ENCODE measurements at regions of chr20 and their contacts with region 1.

Region 1: DNA sequence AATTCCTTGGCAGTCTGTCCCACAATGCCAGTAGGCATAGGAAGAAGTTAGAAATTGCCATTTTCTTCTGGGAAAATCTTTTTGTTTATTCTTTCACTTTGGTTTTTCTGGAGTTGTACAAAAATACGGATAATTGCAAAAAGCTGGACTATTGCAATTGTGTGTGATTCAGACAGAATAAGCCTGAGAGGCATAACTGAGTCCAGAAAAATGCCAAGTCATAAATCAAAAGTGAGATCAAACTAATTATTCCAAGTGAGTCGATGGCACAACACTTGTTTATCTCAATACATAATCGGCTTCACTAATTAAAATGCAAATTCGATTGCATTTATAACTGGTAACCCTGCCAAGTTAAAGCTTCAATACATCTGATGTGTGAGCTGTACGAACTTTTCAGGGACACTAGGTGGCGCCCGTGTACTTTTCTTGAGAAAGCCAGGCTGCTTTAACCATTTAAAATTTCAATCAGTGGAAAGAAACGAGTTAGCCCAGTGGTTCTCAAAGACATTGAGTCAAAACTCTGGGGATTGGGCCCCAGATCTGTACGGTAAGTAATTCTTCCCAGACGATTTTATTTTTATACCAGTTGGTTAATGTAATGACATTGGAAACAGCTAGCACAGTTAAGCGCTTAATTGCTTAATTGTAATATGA is 102.6 kb downstream of the LAMP5 start:
- DNase-seq: peak in 1 of 2 experiments; percentile 67
- H3K4me3 ChIP-seq: no peak overlapping the region
- H3K27ac ChIP-seq: no peak overlapping the region
- H3K4me1 ChIP-seq: no peaks in the 10 kb centered on the region
- H3K27me3 ChIP-seq: no peaks in the 10 kb centered on the region
- CTCF ChIP-seq: peak in 2 of 3 experiments; percentile 79 to 85; a peak in 3 of 4 replicates
- EP300 ChIP-seq: no peak
- POLR2A ChIP-seq: no peak
- RAD21 ChIP-seq: peak; percentile 93 to 97

Region 2: DNA sequence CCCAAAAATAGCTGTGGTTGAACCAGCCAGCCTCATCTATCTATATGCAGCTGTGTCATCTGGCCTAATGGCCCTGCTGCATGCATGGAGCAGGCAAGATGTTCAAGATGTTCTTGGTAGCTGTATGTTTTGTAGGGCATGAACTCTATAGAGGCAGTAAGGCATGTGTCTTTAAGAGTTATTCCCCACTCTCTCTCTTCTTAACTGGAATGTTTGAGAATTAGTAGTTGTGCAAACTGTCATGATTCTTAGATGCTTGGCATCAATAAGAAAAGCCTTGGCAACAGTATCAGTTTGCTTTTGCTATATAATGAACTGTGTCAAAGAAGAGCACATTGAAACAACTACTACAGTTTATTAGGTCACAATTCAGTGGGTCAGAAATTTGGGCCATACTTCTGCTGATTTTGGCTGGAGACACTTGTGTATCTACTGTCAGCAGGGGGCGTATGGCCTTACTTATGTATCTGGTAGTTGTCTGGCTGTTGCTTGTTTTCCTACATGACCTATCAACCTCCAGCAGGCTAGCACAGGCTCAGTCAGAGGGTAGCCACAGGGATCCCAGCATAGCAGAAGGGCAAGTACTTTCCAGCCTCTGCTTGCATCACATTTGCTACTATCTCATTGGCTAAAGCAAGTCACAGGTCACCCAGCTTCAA is 158.7 kb before region 1 on chr20:
- CTCF ChIA-PET with region 1: interaction called, 89 read pairs
- POLR2A ChIA-PET with region 1: no interaction called
- DNase-seq: peak in 1 of 2 experiments; percentile 53
- H3K4me3 ChIP-seq: no peak overlapping the region
- H3K27ac ChIP-seq: no peak overlapping the region
- H3K4me1 ChIP-seq: no peaks in the 10 kb centered on the region
- H3K27me3 ChIP-seq: no peaks in the 10 kb centered on the region
- CTCF ChIP-seq: peak in 2 of 3 experiments; percentile 53 to 62; a peak in 3 of 4 replicates
- EP300 ChIP-seq: no peak
- POLR2A ChIP-seq: no peak
- RAD21 ChIP-seq: peak; percentile 54 to 56; a peak in 3 of 4 replicates

Region 3: DNA sequence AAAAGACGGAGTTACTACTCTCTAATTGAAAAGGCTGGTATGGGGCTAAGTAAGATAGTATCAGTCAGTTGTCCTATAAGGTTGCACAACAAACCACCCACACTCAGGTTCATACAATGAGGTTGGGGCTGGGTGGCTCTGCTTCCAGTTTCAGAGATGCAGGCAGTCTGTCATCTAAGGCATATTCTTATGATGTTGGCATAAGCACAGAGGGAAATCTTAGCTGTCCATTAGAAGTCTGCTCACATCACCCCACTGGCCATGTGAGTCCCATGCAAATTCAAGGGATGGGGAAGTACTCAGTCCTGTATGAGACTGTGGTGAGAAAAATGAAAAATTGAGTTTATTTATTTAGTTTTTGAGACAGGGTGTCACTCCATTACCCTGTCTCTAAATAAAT is 16.0 kb after region 1 on chr20:
- CTCF ChIA-PET with region 1: interaction called, 29 read pairs
- POLR2A ChIA-PET with region 1: no interaction called
- DNase-seq: no peak
- H3K4me3 ChIP-seq: no peak overlapping the region
- H3K27ac ChIP-seq: no peak overlapping the region
- H3K4me1 ChIP-seq: no peaks in the 10 kb centered on the region
- H3K27me3 ChIP-seq: no peaks in the 10 kb centered on the region
- CTCF ChIP-seq: no peak
- EP300 ChIP-seq: no peak
- POLR2A ChIP-seq: no peak
- RAD21 ChIP-seq: no peak

Region 4: GRCh38 chr20:9912858-9913434 is 296.0 kb after region 1 on chr20:
- CTCF ChIA-PET with region 1: interaction called, 76 read pairs
- POLR2A ChIA-PET with region 1: no interaction called
- DNase-seq: peak in 1 of 2 experiments; percentile 72
- H3K4me3 ChIP-seq: no peak overlapping the region
- H3K27ac ChIP-seq: no peak overlapping the region
- H3K4me1 ChIP-seq: no peaks in the 10 kb centered on the region
- H3K27me3 ChIP-seq: no peaks in the 10 kb centered on the region
- CTCF ChIP-seq: peak in 2 of 3 experiments; percentile 70 to 74; a peak in 3 of 4 replicates
- EP300 ChIP-seq: no peak
- POLR2A ChIP-seq: no peak
- RAD21 ChIP-seq: peak; percentile 60 to 62

Region 5: GRCh38 chr20:9978397-9979004 is 361.5 kb after region 1 on chr20:
- CTCF ChIA-PET with region 1: interaction called, 43 read pairs
- POLR2A ChIA-PET with region 1: no interaction called
- DNase-seq: no peak
- H3K4me3 ChIP-seq: no peak overlapping the region
- H3K27ac ChIP-seq: no peak overlapping the region
- H3K4me1 ChIP-seq: no peaks in the 10 kb centered on the region
- H3K27me3 ChIP-seq: no peaks in the 10 kb centered on the region
- CTCF ChIP-seq: peak in 2 of 3 experiments; percentile 78 to 79; a peak in 3 of 4 replicates
- EP300 ChIP-seq: no peak
- POLR2A ChIP-seq: no peak
- RAD21 ChIP-seq: peak; percentile 96 to 97

Region 6: DNA sequence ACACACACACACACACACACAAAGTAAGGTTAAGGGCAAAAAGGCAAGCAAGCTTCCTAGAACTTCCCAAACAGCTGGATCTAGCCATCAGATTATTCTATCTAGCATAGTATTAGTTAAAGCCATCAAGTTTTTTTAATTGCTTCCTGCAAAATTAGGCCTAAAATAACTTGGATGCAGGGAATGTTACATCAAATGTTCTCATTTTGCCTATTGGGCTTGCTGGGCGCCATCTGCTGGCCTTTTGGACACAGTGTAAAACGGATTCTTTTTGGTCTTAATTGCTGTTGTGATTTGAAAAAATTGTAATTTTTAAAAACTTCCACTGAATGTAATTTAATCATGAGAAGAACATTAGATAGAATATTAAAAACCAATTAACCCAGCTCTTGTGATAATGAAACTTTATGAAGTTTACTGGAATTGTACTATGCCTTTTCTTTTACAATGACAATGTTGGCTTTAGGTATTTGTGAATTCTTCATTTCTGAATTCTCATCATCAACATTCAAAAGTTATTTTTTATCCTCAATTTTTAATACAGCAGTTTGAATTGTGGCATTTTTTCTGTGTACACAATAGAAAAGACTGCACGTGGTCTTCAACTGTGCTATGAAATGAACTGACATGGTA is 810.2 kb after region 1 on chr20:
- CTCF ChIA-PET with region 1: interaction called, 14 read pairs
- POLR2A ChIA-PET with region 1: no interaction called
- DNase-seq: no peak
- H3K4me3 ChIP-seq: no peak overlapping the region
- H3K27ac ChIP-seq: no peak overlapping the region
- H3K4me1 ChIP-seq: no peaks in the 10 kb centered on the region
- H3K27me3 ChIP-seq: no peaks in the 10 kb centered on the region
- CTCF ChIP-seq: peak in 2 of 3 experiments; percentile 59 to 68; a peak in 3 of 4 replicates
- EP300 ChIP-seq: no peak
- POLR2A ChIP-seq: no peak
- RAD21 ChIP-seq: peak; percentile 63 to 68

Measured in H1 (cell line).